ENCODE measurements at regions of chr3 and their contacts with region 1.

Region 1: DNA sequence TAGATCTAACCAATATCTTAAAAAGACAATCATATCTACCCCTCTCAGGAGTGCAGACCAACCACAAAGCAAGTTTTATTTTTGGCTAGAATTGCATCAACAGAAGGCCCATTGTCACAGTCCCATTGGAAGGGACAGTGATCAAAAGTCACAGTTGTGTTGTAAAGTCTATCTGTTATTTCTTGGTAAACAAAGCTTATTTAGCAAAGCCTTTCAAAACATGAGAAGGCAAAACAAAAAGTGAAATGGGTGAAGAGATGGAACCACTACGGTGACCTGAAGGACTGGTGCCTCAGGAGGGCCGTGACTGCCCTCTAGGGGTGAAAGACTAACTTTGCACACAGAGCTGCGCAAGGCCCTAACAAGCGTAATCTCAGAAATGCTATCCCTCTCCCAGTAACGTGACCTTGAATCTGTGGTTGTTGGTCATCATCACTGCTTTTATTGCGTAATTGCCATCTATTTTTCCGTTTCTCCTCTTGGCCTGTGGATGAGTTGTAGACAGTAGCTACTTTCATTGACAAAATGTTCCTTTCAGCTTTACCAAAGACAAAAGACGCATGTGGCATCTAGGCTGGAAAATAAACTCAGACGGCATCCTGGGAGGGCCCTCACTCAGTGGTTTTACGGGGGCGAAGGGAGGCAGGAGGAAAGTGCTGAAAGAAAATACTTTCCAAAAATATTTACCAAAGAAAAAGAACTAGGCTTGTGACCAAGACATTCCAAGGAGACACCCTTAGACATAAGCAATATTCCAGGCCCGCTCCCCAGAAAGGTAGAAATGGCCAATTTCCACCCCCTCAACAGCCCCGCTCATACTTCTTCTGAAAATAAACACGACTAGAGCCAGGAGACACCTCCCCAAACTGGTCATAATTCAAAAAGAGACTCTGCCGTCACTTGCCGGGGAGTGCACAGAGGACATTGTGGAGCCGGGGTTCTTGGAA is 79.4 kb downstream of the FRMD4B start:
- DNase-seq: peak; percentile 83
- ATAC-seq: peak; percentile 89
- H3K4me3 Mint-ChIP-seq: no peak overlapping the region
- H3K27ac Mint-ChIP-seq: no peak overlapping the region
- H3K4me1 Mint-ChIP-seq: peaks cover 21% of the 10 kb centered on the region
- H3K27me3 Mint-ChIP-seq: no peaks in the 10 kb centered on the region

Region 2: DNA sequence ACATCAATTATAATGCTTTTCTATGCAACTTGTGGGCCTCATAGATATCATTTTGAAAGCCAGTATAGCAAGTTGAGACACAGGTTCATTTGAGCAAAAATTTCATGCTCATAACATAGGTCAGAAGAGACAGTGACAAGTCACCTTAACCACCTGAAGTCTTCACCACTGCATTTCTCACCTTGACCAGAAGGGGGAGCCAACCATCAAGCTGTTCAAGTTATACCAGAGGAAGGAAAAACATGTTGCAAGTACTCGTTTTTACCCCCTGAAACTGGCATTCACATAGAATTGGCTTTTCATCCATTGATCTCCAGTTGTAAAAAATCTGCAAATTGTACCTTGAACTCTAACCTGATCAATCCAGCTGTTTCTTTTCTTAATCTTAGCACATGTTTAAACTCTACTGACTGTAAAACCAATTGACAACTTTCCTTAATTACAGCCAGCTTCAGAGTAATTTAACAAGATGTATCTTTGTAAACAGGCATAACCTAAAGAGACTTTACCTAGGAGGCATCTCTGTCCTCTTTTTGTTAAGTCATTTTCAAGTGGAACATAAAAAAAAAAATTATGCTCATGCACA is 185.5 kb before region 1 on chr3:
- CTCF ChIA-PET with region 1: interaction called, 37 read pairs
- POLR2A ChIA-PET with region 1: no interaction called
- intact Hi-C with region 1: loop called (anchors 1 kb)
- DNase-seq: peak; percentile 89
- ATAC-seq: peak; percentile 78
- H3K4me3 Mint-ChIP-seq: no peak overlapping the region
- H3K27ac Mint-ChIP-seq: no peak overlapping the region
- H3K4me1 Mint-ChIP-seq: peaks cover 3% of the 10 kb centered on the region
- H3K27me3 Mint-ChIP-seq: no peaks in the 10 kb centered on the region

Region 3: DNA sequence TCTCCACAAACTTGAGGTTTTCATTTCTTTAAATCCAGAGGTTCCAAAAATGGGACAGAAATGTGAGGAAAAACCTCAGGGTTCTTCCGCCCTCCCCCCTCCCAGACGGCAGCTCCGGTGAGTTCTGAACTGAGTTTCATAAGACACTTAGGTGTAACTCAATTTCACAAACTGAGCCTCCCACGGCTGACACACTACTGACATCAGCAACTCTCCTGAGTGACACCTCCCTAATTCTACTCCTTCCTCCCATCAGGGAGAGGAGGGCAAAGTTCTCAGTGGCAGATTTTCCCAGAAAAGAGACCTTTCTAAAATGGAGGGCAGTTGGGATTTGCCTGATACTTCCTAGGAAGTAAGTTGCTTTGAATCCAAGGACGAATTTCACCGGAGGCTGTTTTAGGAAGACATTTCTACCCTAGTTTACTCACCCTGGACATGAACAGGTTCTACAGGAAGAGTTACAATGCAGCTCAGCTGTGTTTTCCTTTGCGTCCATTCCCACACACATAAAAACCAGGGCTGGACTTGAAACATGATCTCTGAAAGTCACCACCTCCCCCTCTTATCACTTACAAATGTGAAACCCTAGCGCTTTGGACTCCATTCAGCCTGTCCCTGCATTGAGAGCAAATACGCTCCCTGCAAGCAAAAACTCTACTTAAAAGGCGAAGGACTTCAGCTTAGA is 106.0 kb before region 1 on chr3:
- CTCF ChIA-PET with region 1: interaction called, 25 read pairs
- POLR2A ChIA-PET with region 1: interaction called, 3 read pairs
- intact Hi-C with region 1: loop called (anchors 1 kb)
- DNase-seq: peak; percentile 80
- ATAC-seq: peak; percentile 44
- H3K4me3 Mint-ChIP-seq: peak overlapping the region; percentile 74
- H3K27ac Mint-ChIP-seq: peak overlapping the region; percentile 91
- H3K4me1 Mint-ChIP-seq: peaks cover 66% of the 10 kb centered on the region
- H3K27me3 Mint-ChIP-seq: peaks cover 3% of the 10 kb centered on the region

Region 4: GRCh38 chr3:69282181-69282580 is 24.3 kb before region 1 on chr3:
- CTCF ChIA-PET with region 1: interaction called, 31 read pairs
- POLR2A ChIA-PET with region 1: interaction called, 6 read pairs
- intact Hi-C with region 1: loop called (anchors 1 kb)
- DNase-seq: peak; percentile 83
- ATAC-seq: peak; percentile 100
- H3K4me3 Mint-ChIP-seq: no peak overlapping the region
- H3K27ac Mint-ChIP-seq: peak overlapping the region; percentile 52
- H3K4me1 Mint-ChIP-seq: peaks cover 26% of the 10 kb centered on the region
- H3K27me3 Mint-ChIP-seq: peaks cover under 1% of the 10 kb centered on the region

Region 5: GRCh38 chr3:69410250-69410649 is 103.7 kb after region 1 on chr3:
- CTCF ChIA-PET with region 1: interaction called, 7 read pairs
- POLR2A ChIA-PET with region 1: no interaction called
- intact Hi-C with region 1: loop called in 1 of 2 experiments (anchors 5 kb)
- DNase-seq: peak; percentile 82
- ATAC-seq: peak; percentile 98
- H3K4me3 Mint-ChIP-seq: no peak overlapping the region
- H3K27ac Mint-ChIP-seq: no peak overlapping the region
- H3K4me1 Mint-ChIP-seq: peaks cover 4% of the 10 kb centered on the region
- H3K27me3 Mint-ChIP-seq: peaks cover 3% of the 10 kb centered on the region

Region 6: GRCh38 chr3:69671082-69671952 is 364.8 kb after region 1 on chr3:
- CTCF ChIA-PET with region 1: no interaction called
- POLR2A ChIA-PET with region 1: no interaction called
- intact Hi-C with region 1: loop called in 1 of 2 experiments (anchors 5 kb)
- DNase-seq: peak; percentile 11
- ATAC-seq: no peak
- H3K4me3 Mint-ChIP-seq: no peak overlapping the region
- H3K27ac Mint-ChIP-seq: no peak overlapping the region
- H3K4me1 Mint-ChIP-seq: no peaks in the 10 kb centered on the region
- H3K27me3 Mint-ChIP-seq: no peaks in the 10 kb centered on the region

Measured in activated CD4-positive, alpha-beta T cell treated with anti-CD3 and anti-CD28 coated beads for 36 hours (primary cell).